Prostate gland (tissue), 2 donors: ENCODE measurements at regions of chr7 and their contacts with region 1.

Region 1: GRCh38 chr7:30800785-30801252 is 29.6 kb downstream of the MINDY4 start:
- DNase-seq: peak; percentile 65
- H3K4me3 ChIP-seq: no peak overlapping the region
- H3K27ac ChIP-seq: no peak overlapping the region
- H3K4me1 ChIP-seq: no peaks in the 10 kb centered on the region
- H3K27me3 ChIP-seq: no peaks in the 10 kb centered on the region
- CTCF ChIP-seq: peak; percentile 28 to 79 (median 60)
- POLR2A ChIP-seq: no peak

Region 2: DNA sequence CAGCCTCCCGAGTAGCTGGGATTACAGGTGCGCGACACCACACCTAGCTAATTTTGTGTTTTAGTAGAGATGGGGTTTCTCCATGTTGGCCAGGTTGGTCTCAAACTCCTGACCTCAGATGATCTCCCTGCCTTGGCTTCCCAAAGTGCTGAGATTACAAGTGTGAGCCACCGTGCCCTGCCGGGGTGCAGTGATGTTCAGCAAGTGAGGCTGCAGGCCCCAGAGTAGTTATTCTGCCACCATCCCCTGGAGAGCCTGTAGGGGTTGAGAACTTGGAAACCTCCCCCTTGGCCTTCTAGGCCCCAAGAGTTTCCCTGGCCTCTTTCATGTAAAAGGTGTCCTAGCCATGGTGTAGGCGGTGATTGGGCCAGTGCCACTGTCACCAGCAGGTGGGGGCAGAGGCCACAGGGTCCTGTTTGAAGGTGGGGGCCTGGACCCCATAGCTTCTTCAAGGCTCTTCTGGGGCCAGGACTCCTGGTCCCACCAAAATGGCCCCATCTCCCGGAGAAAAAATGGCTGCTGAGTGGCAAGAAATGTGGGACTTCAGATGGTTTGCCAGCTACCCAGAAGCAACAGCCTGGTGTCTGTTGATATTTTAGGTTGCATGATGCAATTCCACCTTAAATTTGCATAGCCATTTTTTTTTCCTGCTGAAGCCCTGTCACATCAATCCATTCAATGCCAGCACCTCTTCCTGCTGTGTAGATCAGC is 74.4 kb before region 1 on chr7:
- intact Hi-C with region 1: no loop called
- DNase-seq: no peak
- H3K4me3 ChIP-seq: no peak overlapping the region
- H3K27ac ChIP-seq: no peak overlapping the region
- H3K4me1 ChIP-seq: no peaks in the 10 kb centered on the region
- H3K27me3 ChIP-seq: no peaks in the 10 kb centered on the region
- CTCF ChIP-seq: no peak
- POLR2A ChIP-seq: no peak

Region 3: DNA sequence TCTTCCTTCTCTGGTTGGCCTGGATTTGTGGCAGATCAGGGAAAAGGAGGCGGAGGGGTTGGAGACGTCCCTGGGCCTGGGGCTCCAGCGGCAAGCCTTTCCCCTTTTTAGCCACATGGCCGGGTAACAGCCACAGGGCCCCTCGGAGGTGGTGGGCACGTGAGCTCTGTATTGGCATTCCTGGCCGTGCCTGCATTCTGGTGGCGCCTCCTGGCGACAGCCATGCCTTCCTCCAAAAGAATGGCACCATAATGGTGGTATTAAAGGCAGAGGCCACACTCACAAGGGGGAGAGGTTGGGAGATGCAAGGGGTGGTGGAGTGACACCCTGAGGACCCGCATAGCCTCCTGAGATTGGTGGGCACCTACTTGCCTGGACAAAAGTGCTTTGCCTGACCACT is 107.9 kb after region 1 on chr7:
- intact Hi-C with region 1: loop called (anchors 5 kb)
- DNase-seq: no peak
- H3K4me3 ChIP-seq: no peak overlapping the region
- H3K27ac ChIP-seq: no peak overlapping the region
- H3K4me1 ChIP-seq: no peaks in the 10 kb centered on the region
- H3K27me3 ChIP-seq: no peaks in the 10 kb centered on the region
- CTCF ChIP-seq: no peak
- POLR2A ChIP-seq: no peak

Region 4: GRCh38 chr7:30974605-30975255 is 173.9 kb after region 1 on chr7:
- intact Hi-C with region 1: loop called (anchors 5 kb)
- DNase-seq: peak; percentile 29
- H3K4me3 ChIP-seq: no peak overlapping the region
- H3K27ac ChIP-seq: no peak overlapping the region
- H3K4me1 ChIP-seq: peaks cover 15% of the 10 kb centered on the region
- H3K27me3 ChIP-seq: no peaks in the 10 kb centered on the region
- CTCF ChIP-seq: peak; percentile 17 to 72 (median 53)
- POLR2A ChIP-seq: no peak

Region 5: DNA sequence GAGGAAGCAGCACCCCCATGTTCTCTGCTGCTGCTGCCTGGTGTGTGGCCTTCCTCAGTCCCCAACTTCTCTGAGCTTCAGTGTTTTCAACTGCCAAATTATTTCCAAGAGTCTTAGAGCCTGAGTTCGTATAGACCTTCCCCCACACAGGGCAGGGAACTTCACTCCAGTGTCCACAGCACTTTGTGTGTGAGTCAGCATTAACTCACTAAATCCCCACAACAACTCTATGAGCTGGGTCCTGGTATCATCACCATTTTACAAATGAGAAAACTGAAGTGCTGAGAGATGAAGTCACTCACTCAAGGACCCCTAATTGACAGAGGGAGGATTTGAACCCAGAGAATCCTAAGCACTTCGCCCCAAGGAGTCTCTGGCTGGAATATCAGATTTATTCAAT is 299.6 kb after region 1 on chr7:
- intact Hi-C with region 1: no loop called
- DNase-seq: no peak
- H3K4me3 ChIP-seq: no peak overlapping the region
- H3K27ac ChIP-seq: no peak overlapping the region
- H3K4me1 ChIP-seq: no peaks in the 10 kb centered on the region
- H3K27me3 ChIP-seq: no peaks in the 10 kb centered on the region
- CTCF ChIP-seq: no peak
- POLR2A ChIP-seq: no peak